Activated naive CD4-positive, alpha-beta T cell treated with anti-CD3 and anti-CD28 coated beads for 36 hours (primary cell): ENCODE measurements at regions of chr13 and their contacts with region 1.

Region 1: GRCh38 chr13:25901460-25902376 is 150.1 kb downstream of the SHISA2 start:
- DNase-seq: peak; percentile 57
- H3K4me3 Mint-ChIP-seq: no peak overlapping the region
- H3K27ac Mint-ChIP-seq: no peak overlapping the region
- H3K4me1 Mint-ChIP-seq: peaks cover 25% of the 10 kb centered on the region
- H3K27me3 Mint-ChIP-seq: no peaks in the 10 kb centered on the region

Region 2: GRCh38 chr13:25762795-25763377 is 138.8 kb before region 1 on chr13:
- CTCF ChIA-PET with region 1: no interaction called
- intact Hi-C with region 1: loop called (anchors 1 kb)
- DNase-seq: peak; percentile 35
- H3K4me3 Mint-ChIP-seq: no peak overlapping the region
- H3K27ac Mint-ChIP-seq: peak overlapping the region; percentile 41
- H3K4me1 Mint-ChIP-seq: peaks cover 25% of the 10 kb centered on the region
- H3K27me3 Mint-ChIP-seq: no peaks in the 10 kb centered on the region

Region 3: GRCh38 chr13:25847145-25847544 is 54.6 kb before region 1 on chr13:
- CTCF ChIA-PET with region 1: no interaction called
- intact Hi-C with region 1: loop called (anchors 1 kb)
- DNase-seq: peak; percentile 22
- H3K4me3 Mint-ChIP-seq: no peak overlapping the region
- H3K27ac Mint-ChIP-seq: peak overlapping the region; percentile 22
- H3K4me1 Mint-ChIP-seq: peaks cover 35% of the 10 kb centered on the region
- H3K27me3 Mint-ChIP-seq: peaks cover under 1% of the 10 kb centered on the region

Region 4: GRCh38 chr13:25886438-25887214 is 15.1 kb before region 1 on chr13:
- CTCF ChIA-PET with region 1: interaction called, 4 read pairs
- intact Hi-C with region 1: loop called (anchors 1 kb)
- DNase-seq: peak; percentile 51
- H3K4me3 Mint-ChIP-seq: no peak overlapping the region
- H3K27ac Mint-ChIP-seq: peak overlapping the region; percentile 16
- H3K4me1 Mint-ChIP-seq: peaks cover 66% of the 10 kb centered on the region
- H3K27me3 Mint-ChIP-seq: no peaks in the 10 kb centered on the region

Region 5: GRCh38 chr13:26011996-26012821 is 110.5 kb after region 1 on chr13:
- CTCF ChIA-PET with region 1: no interaction called
- intact Hi-C with region 1: loop called (anchors 2 kb)
- DNase-seq: peak; percentile 70
- H3K4me3 Mint-ChIP-seq: peak overlapping the region; percentile 74
- H3K27ac Mint-ChIP-seq: peak overlapping the region; percentile 72
- H3K4me1 Mint-ChIP-seq: peaks cover 25% of the 10 kb centered on the region
- H3K27me3 Mint-ChIP-seq: no peaks in the 10 kb centered on the region

Region 6: GRCh38 chr13:27147530-27148170 is 1245.9 kb after region 1 on chr13:
- CTCF ChIA-PET with region 1: no interaction called
- intact Hi-C with region 1: loop called (anchors 10 kb)
- DNase-seq: no peak
- H3K4me3 Mint-ChIP-seq: peak overlapping the region; percentile 56
- H3K27ac Mint-ChIP-seq: peak overlapping the region; percentile 93
- H3K4me1 Mint-ChIP-seq: peaks cover 81% of the 10 kb centered on the region
- H3K27me3 Mint-ChIP-seq: no peaks in the 10 kb centered on the region